Activated CD8-positive, alpha-beta T cell treated with anti-CD3 and anti-CD28 coated beads, Interleukin-2, amount 10 ng/mL, durations not matched to agents 7 days and 5 days (primary cell): ENCODE measurements at regions of chr6 and their contacts with region 1.

Region 1: DNA sequence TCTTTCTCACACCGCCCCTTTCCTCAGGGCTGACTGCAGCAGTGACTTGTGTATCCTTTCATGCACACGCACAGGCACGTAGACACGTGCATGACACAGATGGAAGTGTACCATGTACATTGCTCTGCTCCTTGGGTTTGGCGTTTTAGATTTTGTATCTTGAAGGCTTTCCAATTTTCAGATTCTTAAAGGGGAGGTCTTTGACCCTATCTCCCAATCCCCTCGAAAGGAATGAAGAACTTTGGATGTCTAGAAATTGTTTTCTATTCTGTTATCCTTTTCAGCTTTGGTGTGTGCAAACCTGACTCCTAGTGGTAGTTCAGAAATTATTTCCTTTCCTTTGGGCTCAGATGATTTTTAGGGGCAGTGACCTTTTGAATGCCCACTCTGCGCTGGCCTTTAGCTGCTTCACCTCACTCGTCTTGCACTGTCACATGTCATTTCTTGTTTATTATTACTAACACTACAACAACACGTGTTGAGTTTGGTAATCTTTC is 63.0 kb downstream of the HIVEP1 start:
- DNase-seq: no peak
- ATAC-seq: no peak
- H3K4me3 Mint-ChIP-seq: no peak overlapping the region
- H3K27ac Mint-ChIP-seq: peak overlapping the region; percentile 23
- H3K4me1 Mint-ChIP-seq: peaks cover 36% of the 10 kb centered on the region
- H3K27me3 Mint-ChIP-seq: no peaks in the 10 kb centered on the region

Region 2: GRCh38 chr6:11754625-11755271 is 320.4 kb before region 1 on chr6:
- CTCF ChIA-PET with region 1: no interaction called
- POLR2A ChIA-PET with region 1: no interaction called
- DNase-seq: no peak
- ATAC-seq: no peak
- H3K4me3 Mint-ChIP-seq: no peak overlapping the region
- H3K27ac Mint-ChIP-seq: no peak overlapping the region
- H3K4me1 Mint-ChIP-seq: peaks cover 6% of the 10 kb centered on the region
- H3K27me3 Mint-ChIP-seq: no peaks in the 10 kb centered on the region

Region 3: GRCh38 chr6:11810039-11810541 is 265.0 kb before region 1 on chr6:
- CTCF ChIA-PET with region 1: no interaction called
- POLR2A ChIA-PET with region 1: no interaction called
- DNase-seq: no peak
- ATAC-seq: no peak
- H3K4me3 Mint-ChIP-seq: no peak overlapping the region
- H3K27ac Mint-ChIP-seq: no peak overlapping the region
- H3K4me1 Mint-ChIP-seq: peaks cover 14% of the 10 kb centered on the region
- H3K27me3 Mint-ChIP-seq: no peaks in the 10 kb centered on the region

Region 4: GRCh38 chr6:11975353-11975977 is 99.7 kb before region 1 on chr6:
- CTCF ChIA-PET with region 1: no interaction called
- POLR2A ChIA-PET with region 1: no interaction called
- DNase-seq: peak; percentile 73
- ATAC-seq: peak; percentile 83
- H3K4me3 Mint-ChIP-seq: peak overlapping the region; percentile 0
- H3K27ac Mint-ChIP-seq: peak overlapping the region; percentile 69
- H3K4me1 Mint-ChIP-seq: peaks cover 38% of the 10 kb centered on the region
- H3K27me3 Mint-ChIP-seq: no peaks in the 10 kb centered on the region

Region 5: DNA sequence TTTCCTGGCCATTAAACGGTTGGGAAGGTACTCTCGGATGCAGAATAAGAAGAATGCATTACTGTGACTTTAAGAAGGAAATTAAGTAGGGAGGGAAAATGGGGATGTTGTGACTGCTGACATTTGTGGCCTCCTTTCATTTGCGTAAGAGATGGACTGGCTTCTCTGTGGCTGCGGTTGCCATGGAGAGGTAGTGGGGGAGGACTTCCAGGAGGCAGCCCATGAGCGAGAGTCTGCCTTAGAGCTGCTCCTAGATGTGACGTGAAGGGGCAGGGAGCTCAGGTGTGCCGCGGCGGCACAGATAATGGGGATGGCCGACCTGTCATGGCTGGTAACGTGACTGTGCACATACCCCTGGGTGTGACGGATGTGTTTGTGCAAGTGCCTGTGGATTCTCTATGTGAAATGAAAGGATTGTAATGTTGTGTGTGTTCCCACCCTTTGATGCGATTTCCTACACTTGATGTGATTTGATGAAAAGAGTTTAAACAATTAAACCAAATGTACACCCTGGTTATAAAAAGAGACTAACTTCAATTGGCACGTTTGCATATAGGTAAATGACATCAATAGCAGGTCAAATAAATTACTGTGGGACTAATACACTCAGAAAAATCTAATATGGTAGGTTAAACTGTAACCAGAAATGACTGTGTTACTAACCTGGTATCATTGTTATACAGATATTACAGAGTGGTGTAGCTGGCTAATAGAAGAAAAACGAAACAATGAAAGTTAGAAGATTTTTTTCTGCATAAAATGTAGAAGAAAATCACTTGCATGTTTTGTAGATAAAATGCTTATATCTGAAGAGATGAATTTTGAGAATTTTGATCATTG is 14.1 kb before region 1 on chr6:
- CTCF ChIA-PET with region 1: interaction called, 33 read pairs
- POLR2A ChIA-PET with region 1: no interaction called
- DNase-seq: peak; percentile 85
- ATAC-seq: peak; percentile 92
- H3K4me3 Mint-ChIP-seq: peak overlapping the region; percentile 69
- H3K27ac Mint-ChIP-seq: peak overlapping the region; percentile 84
- H3K4me1 Mint-ChIP-seq: peaks cover 68% of the 10 kb centered on the region
- H3K27me3 Mint-ChIP-seq: no peaks in the 10 kb centered on the region